ENCODE measurements at regions of chr1 and their contacts with region 1.

Region 1: DNA sequence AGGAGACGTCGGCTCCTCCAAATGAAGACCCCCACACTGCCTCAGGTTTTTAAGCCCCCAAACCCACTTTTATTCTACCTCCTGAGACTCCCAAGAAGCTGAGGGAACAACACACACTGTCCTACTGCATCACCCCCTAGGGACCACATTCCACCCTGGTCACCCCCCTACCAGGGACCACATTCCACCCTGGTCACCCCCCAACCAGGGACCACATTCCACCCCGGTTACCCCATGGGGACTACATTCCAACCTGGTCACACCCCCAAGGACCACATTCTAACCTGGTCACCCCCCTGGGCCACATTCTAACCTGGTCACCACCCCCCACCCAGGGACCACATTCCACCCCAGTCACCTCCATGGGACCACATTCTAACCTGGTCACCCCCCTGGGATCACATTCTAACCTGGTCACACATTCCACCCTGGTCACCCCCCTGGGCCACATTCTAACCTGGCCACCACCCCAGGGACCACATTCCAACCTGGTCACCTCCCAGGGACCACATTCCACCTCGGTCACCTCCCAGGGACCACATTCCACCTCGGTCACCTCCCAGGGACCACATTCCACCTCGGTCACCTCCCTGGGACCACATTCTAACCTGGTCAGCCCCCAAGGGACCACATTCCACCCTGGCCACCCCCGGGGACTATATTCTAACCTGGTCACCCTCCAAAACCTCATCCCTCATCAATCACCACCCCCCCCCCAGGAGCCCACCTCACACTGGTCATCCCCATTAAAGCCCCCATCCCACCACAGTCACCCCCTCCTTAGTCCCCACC is 587.6 kb downstream of the NPHP4 start:
- DNase-seq: peak; percentile 83 to 84
- H3K4me3 ChIP-seq: no peak overlapping the region
- H3K27ac ChIP-seq: peak overlapping the region; percentile 90
- H3K4me1 ChIP-seq: peaks cover 49% of the 10 kb centered on the region
- H3K27me3 ChIP-seq: no peaks in the 10 kb centered on the region
- CTCF ChIP-seq: no peak

Region 2: DNA sequence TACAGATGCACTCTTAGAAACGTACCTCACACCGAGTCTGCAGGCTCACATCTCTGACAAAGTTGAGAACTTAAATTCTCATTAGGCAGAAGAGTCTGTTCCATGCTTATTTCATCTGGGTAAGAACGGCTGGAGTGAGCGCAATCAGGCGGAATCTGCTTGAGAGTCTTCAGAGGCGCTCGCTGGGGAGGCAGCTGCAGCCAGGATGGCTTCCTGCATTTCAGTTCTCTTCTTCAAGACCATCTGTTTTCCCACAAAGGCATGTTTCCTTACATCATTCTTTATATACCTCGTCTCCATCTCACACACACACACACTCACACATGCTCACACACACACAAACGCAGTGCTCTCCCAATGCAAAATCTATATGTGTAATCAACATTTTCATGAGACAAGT is 253.1 kb before region 1 on chr1:
- CTCF ChIA-PET with region 1: interaction called, 17 read pairs
- POLR2A ChIA-PET with region 1: no interaction called
- intact Hi-C with region 1: no loop called
- DNase-seq: no peak
- H3K4me3 ChIP-seq: no peak overlapping the region
- H3K27ac ChIP-seq: no peak overlapping the region
- H3K4me1 ChIP-seq: no peaks in the 10 kb centered on the region
- H3K27me3 ChIP-seq: peaks cover 11% of the 10 kb centered on the region
- CTCF ChIP-seq: no peak

Region 3: GRCh38 chr1:5389101-5389885 is 15.3 kb before region 1 on chr1:
- CTCF ChIA-PET with region 1: no interaction called
- POLR2A ChIA-PET with region 1: no interaction called
- intact Hi-C with region 1: loop called (anchors 2 kb)
- DNase-seq: peak in 1 of 2 experiments; percentile 40
- H3K4me3 ChIP-seq: no peak overlapping the region
- H3K27ac ChIP-seq: peak overlapping the region; percentile 35
- H3K4me1 ChIP-seq: peaks cover 16% of the 10 kb centered on the region; the same call in 1 of the 2 replicates
- H3K27me3 ChIP-seq: no peaks in the 10 kb centered on the region
- CTCF ChIP-seq: no peak

Region 4: GRCh38 chr1:5424802-5425703 is 20.4 kb after region 1 on chr1:
- CTCF ChIA-PET with region 1: no interaction called
- POLR2A ChIA-PET with region 1: no interaction called
- intact Hi-C with region 1: loop called (anchors 1 kb)
- DNase-seq: peak; percentile 57 to 86
- H3K4me3 ChIP-seq: no peak overlapping the region
- H3K27ac ChIP-seq: peak overlapping the region; percentile 87
- H3K4me1 ChIP-seq: peaks cover 79% of the 10 kb centered on the region
- H3K27me3 ChIP-seq: no peaks in the 10 kb centered on the region
- CTCF ChIP-seq: no peak

Region 5: GRCh38 chr1:5514519-5515183 is 110.0 kb after region 1 on chr1:
- CTCF ChIA-PET with region 1: no interaction called
- POLR2A ChIA-PET with region 1: no interaction called
- intact Hi-C with region 1: loop called (anchors 5 kb)
- DNase-seq: peak in 1 of 2 experiments; percentile 62
- H3K4me3 ChIP-seq: no peak overlapping the region
- H3K27ac ChIP-seq: no peak overlapping the region
- H3K4me1 ChIP-seq: no peaks in the 10 kb centered on the region
- H3K27me3 ChIP-seq: peaks cover 14% of the 10 kb centered on the region
- CTCF ChIP-seq: peak; percentile 98

Measured in PC-9 (cell line).